Stomach (tissue), 19 donors: ENCODE measurements at regions of chr14 and their contacts with region 1.

Region 1: GRCh38 chr14:69149461-69150244 is 3.3 kb downstream of the DCAF5 start:
- DNase-seq: no peak
- H3K4me3 ChIP-seq: no peak overlapping the region
- H3K27ac ChIP-seq: peak overlapping the region in 4 of 5 donors; percentile 36 to 98 (median 72)
- H3K4me1 ChIP-seq: peaks cover 14 to 77% (median 54%) of the 10 kb centered on the region in 4 donors
- H3K27me3 ChIP-seq: no peaks in the 10 kb centered on the region
- CTCF ChIP-seq: no peak
- EP300 ChIP-seq: no peak
- POLR2A ChIP-seq: no peak

Region 2: GRCh38 chr14:68939893-68940613 is 209.6 kb before region 1 on chr14:
- intact Hi-C with region 1: no loop called
- DNase-seq: peak; percentile 48 to 88
- H3K4me3 ChIP-seq: no peak overlapping the region
- H3K27ac ChIP-seq: peak overlapping the region; percentile 49 to 91 (median 85)
- H3K4me1 ChIP-seq: peaks cover 83 to 100% (median 93%) of the 10 kb centered on the region in 4 donors
- H3K27me3 ChIP-seq: no peaks in the 10 kb centered on the region
- CTCF ChIP-seq: no peak
- EP300 ChIP-seq: peak; percentile 73
- POLR2A ChIP-seq: no peak

Region 3: DNA sequence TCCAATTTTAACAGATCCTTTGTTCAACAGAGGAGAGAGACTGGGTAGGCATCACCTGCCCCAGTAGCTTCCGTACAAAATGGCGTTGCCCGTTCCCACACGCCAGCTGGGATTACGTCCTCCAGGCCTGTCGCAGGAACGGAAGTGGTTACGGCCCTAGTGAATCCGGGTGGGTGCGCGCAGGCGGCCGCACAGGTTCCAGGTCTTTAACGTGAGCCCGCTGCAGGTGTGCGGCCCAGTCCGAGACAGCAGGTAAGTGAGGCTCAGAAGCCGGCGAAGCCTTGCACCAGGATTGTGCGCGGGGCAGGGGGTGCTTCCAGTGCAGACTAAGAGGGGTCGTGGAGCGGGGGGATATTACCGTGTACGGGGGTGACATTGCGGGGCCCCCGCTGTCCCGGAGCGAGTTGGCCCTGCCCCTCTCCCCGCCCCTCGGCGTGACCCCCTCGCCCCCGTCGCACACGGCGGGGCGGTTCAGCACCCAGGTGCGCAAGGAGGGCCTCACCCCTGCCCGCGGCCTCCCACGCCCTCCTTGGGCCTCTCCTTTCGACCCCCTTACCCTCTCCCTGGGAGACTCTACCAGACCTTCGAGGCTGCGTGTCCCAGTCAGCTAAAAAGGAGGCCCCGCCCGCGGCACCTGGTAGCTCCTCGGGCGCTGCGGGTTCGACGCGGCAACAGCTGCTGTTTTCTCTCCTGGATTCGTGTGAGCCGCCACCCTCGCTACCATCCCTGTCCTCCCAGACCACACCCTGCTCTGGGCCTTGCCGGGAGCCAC is 41.9 kb after region 1 on chr14 and contains the start of gene EXD2:
- intact Hi-C with region 1: loop called (anchors 10 kb)
- DNase-seq: peak; percentile 93 to 97
- H3K4me3 ChIP-seq: peak within 1 kb of the TSS; percentile 57 to 95 (median 68)
- H3K27ac ChIP-seq: peak within 1 kb of the TSS; percentile 79 to 96 (median 88)
- H3K4me1 ChIP-seq: peaks cover 0 to 16% (median 8%) of the 10 kb centered on the region in 4 donors
- H3K27me3 ChIP-seq: no peaks in the 10 kb centered on the region
- CTCF ChIP-seq: no peak
- EP300 ChIP-seq: no peak
- POLR2A ChIP-seq: peak in 1 of 4 donors; percentile 48
- total RNA-seq, gene EXD2: 8.0 to 25.4 (median 14.7) TPM